ENCODE measurements at regions of chr4 and their contacts with region 1.

Region 1: DNA sequence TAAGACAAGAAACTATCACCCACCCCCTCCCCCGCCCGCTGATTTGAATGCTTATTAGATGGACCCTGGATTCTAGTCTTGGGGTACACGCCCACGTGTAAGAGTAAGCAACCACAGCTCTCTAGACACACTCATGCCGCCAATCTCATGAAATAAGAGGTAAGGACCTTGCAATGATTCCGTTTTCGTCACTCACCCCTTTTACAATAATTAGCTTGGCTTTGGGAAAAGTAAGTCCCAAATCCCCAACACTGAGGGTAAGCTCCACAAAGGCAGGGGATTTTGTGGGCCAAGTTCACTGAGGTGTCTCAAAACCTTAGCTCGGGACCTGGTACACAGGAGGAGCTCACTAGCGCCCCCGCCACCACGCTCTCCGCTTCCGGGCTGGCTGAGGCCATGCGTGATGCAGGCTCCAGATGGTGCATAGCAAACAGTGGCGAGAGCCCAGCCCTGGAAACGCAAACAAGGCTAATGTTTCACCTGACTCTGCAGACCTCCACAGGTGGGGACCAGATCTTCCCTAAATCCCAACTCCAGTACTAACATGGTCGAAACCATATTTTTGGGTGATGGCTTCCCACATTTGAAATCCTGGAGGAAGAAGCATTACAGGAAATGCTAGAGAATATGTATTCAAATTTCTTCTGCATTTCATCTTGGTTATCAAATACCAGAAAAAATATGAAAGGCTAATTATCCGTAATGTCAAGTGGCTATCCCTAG is 4.1 kb downstream of the PLAC8 start:
- DNase-seq: peak; percentile 97
- ATAC-seq: peak; percentile 75
- H3K4me3 Mint-ChIP-seq: peak overlapping the region; percentile 84
- H3K27ac Mint-ChIP-seq: peak overlapping the region; percentile 96
- H3K4me1 Mint-ChIP-seq: peaks cover 35% of the 10 kb centered on the region
- H3K27me3 Mint-ChIP-seq: no peaks in the 10 kb centered on the region
- CTCF ChIP-seq: peak; percentile 45

Region 2: DNA sequence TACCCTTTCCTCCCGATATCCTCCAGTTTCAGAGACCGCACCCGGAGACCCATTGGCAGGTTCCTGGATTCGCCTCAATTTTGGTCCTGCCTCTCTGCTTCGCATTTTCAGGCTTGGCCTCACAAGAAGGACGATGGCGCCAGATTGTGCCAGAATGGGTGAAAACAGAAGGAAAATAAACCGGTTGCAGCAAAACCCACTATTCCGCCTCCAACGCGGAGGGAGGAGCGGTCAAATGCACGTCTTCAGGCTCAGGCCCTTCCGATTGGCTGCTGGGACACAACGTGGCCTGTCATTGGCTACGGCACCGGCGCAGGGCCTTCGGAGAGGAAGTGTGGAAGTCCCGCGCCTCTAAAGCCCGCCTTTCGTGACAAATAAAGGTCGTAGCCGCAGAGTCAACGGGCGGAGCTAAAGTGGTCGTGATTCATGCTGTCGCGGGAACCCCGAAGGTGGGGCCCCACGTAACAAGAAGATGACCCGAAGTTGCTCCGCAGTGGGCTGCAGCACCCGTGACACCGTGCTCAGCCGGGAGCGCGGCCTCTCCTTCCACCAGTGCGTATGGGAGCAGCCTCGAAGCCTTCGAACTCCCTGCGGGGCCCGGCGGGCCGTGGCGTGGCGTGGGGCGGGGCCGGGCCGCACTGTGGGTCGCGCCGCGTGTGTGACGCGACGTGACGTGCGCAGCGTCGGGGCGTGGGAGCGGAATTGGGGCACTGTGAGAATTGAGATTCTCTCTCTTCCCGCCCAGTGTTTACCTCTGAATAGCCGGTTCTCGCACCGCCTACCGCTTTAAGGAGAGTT is 209.9 kb before region 1 on chr4 and contains the start of gene THAP9:
- CTCF ChIA-PET with region 1: no interaction called
- POLR2A ChIA-PET with region 1: no interaction called
- intact Hi-C with region 1: loop called (anchors 10 kb)
- DNase-seq: peak; percentile 99
- ATAC-seq: peak; percentile 90
- H3K4me3 Mint-ChIP-seq: no peak within 1 kb of the TSS
- H3K27ac Mint-ChIP-seq: no peak within 1 kb of the TSS
- H3K4me1 Mint-ChIP-seq: peaks cover 47% of the 10 kb centered on the region
- H3K27me3 Mint-ChIP-seq: no peaks in the 10 kb centered on the region
- CTCF ChIP-seq: no peak
- total RNA-seq, gene THAP9: 3.5 to 4.4 TPM

Region 3: GRCh38 chr4:83138946-83139345 is 28.6 kb after region 1 on chr4:
- CTCF ChIA-PET with region 1: interaction called, 3 read pairs
- POLR2A ChIA-PET with region 1: interaction called, 13 read pairs
- intact Hi-C with region 1: no loop called
- DNase-seq: peak; percentile 76
- ATAC-seq: peak; percentile 94
- H3K4me3 Mint-ChIP-seq: no peak overlapping the region
- H3K27ac Mint-ChIP-seq: peak overlapping the region; percentile 70
- H3K4me1 Mint-ChIP-seq: peaks cover 29% of the 10 kb centered on the region
- H3K27me3 Mint-ChIP-seq: no peaks in the 10 kb centered on the region
- CTCF ChIP-seq: no peak

Region 4: GRCh38 chr4:83231620-83232076 is 121.3 kb after region 1 on chr4:
- CTCF ChIA-PET with region 1: no interaction called
- POLR2A ChIA-PET with region 1: interaction called, 3 read pairs
- intact Hi-C with region 1: loop called (anchors 5 kb)
- DNase-seq: peak; percentile 72
- ATAC-seq: peak; percentile 82
- H3K4me3 Mint-ChIP-seq: no peak overlapping the region
- H3K27ac Mint-ChIP-seq: peak overlapping the region; percentile 60
- H3K4me1 Mint-ChIP-seq: peaks cover 49% of the 10 kb centered on the region
- H3K27me3 Mint-ChIP-seq: peaks cover 1% of the 10 kb centered on the region
- CTCF ChIP-seq: no peak

Region 5: DNA sequence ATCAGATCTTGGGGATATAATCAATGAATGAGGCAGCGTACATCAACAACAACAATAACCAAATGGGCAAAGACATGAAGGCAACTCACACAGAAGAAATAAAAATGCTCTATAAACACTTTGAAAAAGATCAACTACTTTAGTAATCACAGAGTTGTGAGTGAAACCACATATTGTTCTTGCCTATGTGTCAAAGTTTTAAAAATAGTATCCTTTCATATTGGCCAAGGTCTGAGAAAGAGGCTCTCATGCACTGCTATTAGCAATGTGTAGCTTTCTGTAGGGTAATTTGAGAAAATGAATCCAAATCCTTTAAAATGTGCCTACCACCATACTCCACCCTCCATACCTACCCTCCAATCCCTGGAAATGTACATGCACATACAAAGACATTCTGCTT is 149.2 kb after region 1 on chr4:
- CTCF ChIA-PET with region 1: interaction called, 31 read pairs
- POLR2A ChIA-PET with region 1: interaction called, 4 read pairs
- intact Hi-C with region 1: no loop called
- DNase-seq: no peak
- ATAC-seq: no peak
- H3K4me3 Mint-ChIP-seq: no peak overlapping the region
- H3K27ac Mint-ChIP-seq: no peak overlapping the region
- H3K4me1 Mint-ChIP-seq: peaks cover 2% of the 10 kb centered on the region
- H3K27me3 Mint-ChIP-seq: no peaks in the 10 kb centered on the region
- CTCF ChIP-seq: no peak

Measured in activated CD8-positive, alpha-beta T cell treated with anti-CD3 and anti-CD28 coated beads for 36 hours (primary cell).